ENCODE measurements at regions of chr10 and their contacts with region 1.

Region 1: DNA sequence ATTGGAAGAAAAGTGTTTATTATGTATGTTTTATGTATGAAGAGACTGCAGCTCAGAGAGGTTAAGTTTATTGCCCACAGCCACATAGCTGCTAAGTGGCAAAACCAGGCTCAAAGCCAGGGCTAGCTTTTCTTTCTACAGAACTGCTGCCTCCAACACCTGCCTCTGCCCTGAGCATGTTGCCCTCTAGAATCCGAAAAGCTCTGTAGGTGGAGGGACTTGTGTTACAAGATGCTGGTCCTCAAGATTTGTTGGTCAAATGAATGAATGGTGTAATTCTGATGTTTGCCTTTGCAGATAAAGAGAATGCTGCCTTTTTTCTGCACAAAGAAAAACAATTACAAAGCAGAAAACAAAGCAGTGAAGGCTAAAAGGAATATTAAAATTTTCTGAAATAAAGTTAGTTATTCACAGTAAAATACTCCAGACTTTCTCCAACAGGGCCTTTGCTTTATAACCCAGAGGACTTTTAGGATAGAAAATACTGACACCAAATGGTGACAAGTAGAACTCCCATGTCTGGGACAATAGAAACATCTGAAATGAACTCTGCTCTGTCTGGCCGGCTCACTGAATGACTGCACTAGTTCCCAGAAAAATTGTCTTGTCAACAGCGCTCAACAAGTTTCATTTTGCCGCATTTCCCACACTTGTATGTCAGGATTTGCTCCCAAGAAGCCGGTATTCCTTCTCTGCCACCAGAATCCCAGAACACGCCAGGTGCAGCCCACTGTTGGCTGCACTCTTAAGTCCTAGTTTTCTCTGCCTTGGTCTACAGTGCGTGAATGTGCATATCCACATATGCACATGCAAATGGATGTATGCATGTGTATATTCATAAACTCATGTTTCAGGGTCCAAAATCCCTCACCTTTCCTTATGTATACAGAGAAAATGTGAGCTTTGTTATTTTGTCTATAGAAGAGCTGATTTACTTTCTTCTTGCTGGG is 11.0 kb upstream of the DNTT start:
- DNase-seq: peak; percentile 46
- ATAC-seq: peak; percentile 89
- H3K4me3 ChIP-seq: no peak overlapping the region
- H3K27ac ChIP-seq: no peak overlapping the region
- H3K4me1 ChIP-seq: no peaks in the 10 kb centered on the region
- H3K27me3 ChIP-seq: no peaks in the 10 kb centered on the region
- CTCF ChIP-seq: peak; percentile 53
- POLR2A ChIP-seq: no peak
- RAD21 ChIP-seq: peak; percentile 58

Region 2: DNA sequence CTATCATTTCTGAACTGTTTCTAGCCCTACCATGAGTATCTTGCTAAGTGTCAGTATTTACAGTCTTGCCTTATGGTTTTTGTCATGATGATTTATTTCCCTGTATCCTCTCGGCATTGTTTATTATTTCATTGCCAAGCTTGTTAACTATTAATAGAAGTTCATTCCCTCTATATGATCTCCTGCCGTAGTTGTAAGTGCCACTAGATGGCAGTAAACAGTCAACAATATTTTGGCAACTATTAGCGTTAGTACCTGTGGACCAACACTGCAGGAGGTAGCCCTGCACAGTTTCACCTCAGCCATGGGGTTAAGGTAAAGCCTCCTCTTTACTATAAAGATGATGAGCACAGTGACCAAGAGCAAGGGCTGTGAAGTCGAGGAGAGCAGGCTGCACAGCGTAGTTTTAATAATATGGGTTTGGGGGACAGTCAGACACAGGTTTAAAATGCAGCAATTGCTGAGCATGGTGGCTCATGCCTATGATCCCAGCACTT is 276.0 kb before region 1 on chr10:
- CTCF ChIA-PET with region 1: interaction called, 3 read pairs
- POLR2A ChIA-PET with region 1: no interaction called
- dilution Hi-C with region 1: no loop called
- in situ Hi-C with region 1: loop called (anchors 5 kb)
- intact Hi-C with region 1: loop called (anchors 1 kb)
- DNase-seq: peak; percentile 54
- ATAC-seq: peak; percentile 89
- H3K4me3 ChIP-seq: no peak overlapping the region
- H3K27ac ChIP-seq: no peak overlapping the region
- H3K4me1 ChIP-seq: no peaks in the 10 kb centered on the region
- H3K27me3 ChIP-seq: peaks cover 8% of the 10 kb centered on the region
- CTCF ChIP-seq: peak; percentile 79
- POLR2A ChIP-seq: no peak
- RAD21 ChIP-seq: peak; percentile 73

Region 3: DNA sequence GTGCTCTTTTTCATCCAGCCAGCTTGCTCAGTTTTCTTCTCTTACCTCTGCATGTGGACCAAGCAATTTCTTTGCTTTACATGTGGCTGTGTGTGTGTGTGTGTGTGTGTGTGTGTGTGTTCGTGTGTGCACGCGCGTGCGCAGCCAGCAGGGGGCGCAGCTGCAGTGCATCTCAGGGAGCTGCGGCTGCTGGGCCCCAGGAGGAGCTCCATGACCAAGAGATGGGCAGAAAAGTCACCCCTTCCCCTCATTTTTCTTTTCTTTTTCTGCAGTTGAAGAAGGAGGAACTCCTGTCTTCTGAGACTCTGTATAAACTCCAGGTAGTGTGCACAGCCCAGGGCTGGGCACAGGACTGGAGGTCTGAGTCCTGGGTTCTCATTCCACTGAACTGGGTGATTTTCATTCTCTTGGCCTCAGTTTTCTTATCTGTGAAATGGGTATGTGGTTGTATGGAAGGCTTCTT is 63.6 kb before region 1 on chr10:
- CTCF ChIA-PET with region 1: interaction called, 4 read pairs
- POLR2A ChIA-PET with region 1: no interaction called
- dilution Hi-C with region 1: no loop called
- in situ Hi-C with region 1: no loop called
- intact Hi-C with region 1: loop called (anchors 1 kb)
- DNase-seq: peak; percentile 58
- ATAC-seq: peak; percentile 75
- H3K4me3 ChIP-seq: no peak overlapping the region
- H3K27ac ChIP-seq: no peak overlapping the region
- H3K4me1 ChIP-seq: no peaks in the 10 kb centered on the region
- H3K27me3 ChIP-seq: no peaks in the 10 kb centered on the region
- CTCF ChIP-seq: peak; percentile 62
- POLR2A ChIP-seq: no peak
- RAD21 ChIP-seq: peak; percentile 41